Activated CD4-positive, alpha-beta memory T cell treated with anti-CD3 and anti-CD28 coated beads for 36 hours (primary cell): ENCODE measurements at regions of chr11 and their contacts with region 1.

Region 1: DNA sequence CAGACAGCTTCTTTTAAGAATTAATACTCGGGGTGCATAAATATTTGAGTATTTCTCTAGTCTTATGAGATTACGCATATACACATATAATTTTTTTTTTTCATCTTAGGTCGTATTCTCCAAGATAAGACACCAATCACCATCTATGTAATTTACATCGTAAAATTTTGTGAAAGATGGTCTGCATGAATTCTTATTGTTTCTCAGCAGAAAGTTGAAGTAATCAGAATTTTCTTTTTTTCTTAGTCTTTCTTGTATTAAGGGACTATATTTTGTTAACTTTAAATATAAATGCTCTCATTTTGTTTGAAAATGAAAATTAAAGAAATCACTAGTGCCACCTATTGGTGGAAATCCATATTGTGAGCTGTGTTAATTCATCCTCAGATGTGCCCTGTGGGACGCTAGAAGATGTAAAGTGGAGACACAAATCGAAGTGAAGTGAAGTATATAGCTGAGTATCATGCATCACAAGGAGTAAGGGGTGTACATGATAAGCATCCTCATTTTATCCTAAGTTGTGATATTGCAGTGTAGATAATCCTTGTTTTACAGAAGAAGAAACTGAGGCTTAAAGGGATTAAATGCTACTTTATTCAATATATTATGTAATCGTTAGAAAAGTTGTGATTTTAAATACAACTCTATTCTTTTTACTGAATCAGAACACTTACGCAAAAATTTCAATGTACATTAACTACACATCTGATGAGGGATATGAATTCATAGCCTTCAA is 2084.3 kb downstream of the LRRC4C start:
- DNase-seq: no peak
- H3K4me3 Mint-ChIP-seq: no peak overlapping the region
- H3K27ac Mint-ChIP-seq: no peak overlapping the region
- H3K4me1 Mint-ChIP-seq: peaks cover 12% of the 10 kb centered on the region
- H3K27me3 Mint-ChIP-seq: no peaks in the 10 kb centered on the region

Region 2: GRCh38 chr11:37946155-37946766 is 1428.9 kb before region 1 on chr11:
- CTCF ChIA-PET with region 1: interaction called, 4 read pairs
- POLR2A ChIA-PET with region 1: no interaction called
- intact Hi-C with region 1: loop called (anchors 5 kb)
- DNase-seq: no peak
- H3K4me3 Mint-ChIP-seq: no peak overlapping the region
- H3K27ac Mint-ChIP-seq: no peak overlapping the region
- H3K4me1 Mint-ChIP-seq: no peaks in the 10 kb centered on the region
- H3K27me3 Mint-ChIP-seq: no peaks in the 10 kb centered on the region

Region 3: GRCh38 chr11:40293655-40294348 is 918.7 kb after region 1 on chr11:
- CTCF ChIA-PET with region 1: interaction called, 3 read pairs
- POLR2A ChIA-PET with region 1: no interaction called
- intact Hi-C with region 1: loop called (anchors 10 kb)
- DNase-seq: peak; percentile 46
- H3K4me3 Mint-ChIP-seq: peak overlapping the region; percentile 21
- H3K27ac Mint-ChIP-seq: no peak overlapping the region
- H3K4me1 Mint-ChIP-seq: peaks cover 8% of the 10 kb centered on the region
- H3K27me3 Mint-ChIP-seq: peaks cover 13% of the 10 kb centered on the region